ENCODE measurements at regions of chr11 and their contacts with region 1.

Region 1: DNA sequence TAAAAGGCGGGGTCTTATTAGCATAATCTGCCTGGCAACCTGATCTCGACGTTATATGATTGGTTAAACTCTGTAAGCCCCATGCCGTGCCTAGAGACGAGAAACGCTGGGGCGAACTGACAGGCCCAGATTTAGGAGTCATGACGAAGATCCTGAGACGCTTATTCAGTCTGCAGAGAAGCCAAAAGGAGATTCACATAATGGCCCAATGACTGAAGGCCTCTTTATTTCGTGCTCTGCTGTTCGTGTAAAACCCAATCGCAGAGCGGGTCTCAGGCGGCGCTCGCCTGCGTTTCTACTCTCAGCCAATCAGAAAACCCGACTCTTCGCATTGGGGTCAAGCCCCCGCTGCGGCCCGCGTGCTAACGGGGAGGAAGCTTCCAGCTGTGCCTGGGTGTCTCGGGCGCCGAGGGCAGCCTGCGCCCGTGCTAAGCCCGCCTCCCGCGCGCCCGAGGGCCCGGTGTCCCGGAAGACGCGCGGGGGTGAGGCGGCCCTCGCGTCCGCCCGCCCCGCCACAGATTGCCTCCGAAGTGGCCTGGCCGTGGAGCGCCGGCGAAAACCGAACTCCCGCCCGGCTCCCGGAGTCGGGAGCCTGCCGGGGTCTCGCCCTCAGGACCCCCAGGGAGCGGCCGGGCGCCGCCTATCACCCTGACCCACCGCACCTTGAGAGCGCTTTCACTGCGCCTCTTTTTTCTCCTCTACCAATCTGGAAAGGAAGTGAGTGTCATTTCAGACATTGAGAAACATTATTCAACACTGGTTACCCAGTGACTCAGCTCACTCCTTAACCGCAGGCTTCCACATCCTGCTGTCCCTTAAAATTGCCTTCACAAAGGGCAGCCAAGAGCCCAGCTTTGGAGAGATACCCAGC is 446 bp upstream of the PRDM10 start:
- DNase-seq: peak; percentile 99
- ATAC-seq: peak; percentile 68
- H3K4me3 ChIP-seq: peak overlapping the region; percentile 86
- H3K27ac ChIP-seq: peak overlapping the region; percentile 98
- H3K4me1 ChIP-seq: peaks cover 26% of the 10 kb centered on the region
- H3K27me3 ChIP-seq: no peaks in the 10 kb centered on the region
- CTCF ChIP-seq: 0 out of 2 replicates have a peak, but pooled peaks have one; percentile 7

Region 2: GRCh38 chr11:129578006-129578405 is 425.1 kb before region 1 on chr11:
- CTCF ChIA-PET with region 1: no interaction called
- POLR2A ChIA-PET with region 1: no interaction called
- intact Hi-C with region 1: no loop called
- DNase-seq: no peak
- ATAC-seq: no peak
- H3K4me3 ChIP-seq: no peak overlapping the region
- H3K27ac ChIP-seq: no peak overlapping the region
- H3K4me1 ChIP-seq: no peaks in the 10 kb centered on the region
- H3K27me3 ChIP-seq: peaks cover 46% of the 10 kb centered on the region
- CTCF ChIP-seq: no peak

Region 3: DNA sequence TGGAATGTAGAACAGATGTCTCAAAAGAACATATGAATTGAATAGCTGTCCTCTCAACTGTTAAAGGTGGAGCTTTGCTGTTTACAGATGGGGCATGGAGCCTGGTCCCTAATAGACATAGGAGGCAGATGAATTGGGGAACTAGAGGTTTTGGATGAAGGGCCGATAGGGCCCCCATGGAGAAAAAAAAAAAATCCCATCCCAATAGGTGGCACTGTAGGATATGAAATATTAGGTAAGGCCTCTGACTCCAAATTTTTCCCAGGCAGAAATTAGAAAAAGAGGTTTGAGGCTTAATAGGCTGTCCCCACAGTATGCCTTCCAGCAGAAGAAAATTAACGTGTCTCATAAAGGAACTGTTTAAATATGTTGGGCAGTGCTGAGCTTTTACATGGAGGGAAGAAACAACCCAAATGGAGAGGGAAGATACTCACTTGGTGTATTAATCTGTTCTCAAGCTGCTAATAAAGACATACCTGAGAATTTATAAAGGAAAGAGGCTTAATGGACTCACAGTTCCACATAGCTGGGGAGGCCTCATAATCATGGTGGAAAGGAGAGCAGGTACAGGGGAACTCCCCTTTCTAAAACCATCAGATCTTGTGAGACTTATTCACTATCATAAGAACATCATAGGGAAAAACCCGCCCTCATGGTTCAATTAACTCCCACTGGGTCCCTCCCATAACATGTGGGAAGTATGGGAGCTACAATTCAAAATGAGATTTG is 217.5 kb before region 1 on chr11:
- CTCF ChIA-PET with region 1: no interaction called
- POLR2A ChIA-PET with region 1: no interaction called
- intact Hi-C with region 1: loop called (anchors 5 kb)
- DNase-seq: peak; percentile 86
- ATAC-seq: peak; percentile 49
- H3K4me3 ChIP-seq: no peak overlapping the region
- H3K27ac ChIP-seq: peak overlapping the region; percentile 45
- H3K4me1 ChIP-seq: peaks cover 34% of the 10 kb centered on the region
- H3K27me3 ChIP-seq: no peaks in the 10 kb centered on the region
- CTCF ChIP-seq: peak; percentile 90

Region 4: DNA sequence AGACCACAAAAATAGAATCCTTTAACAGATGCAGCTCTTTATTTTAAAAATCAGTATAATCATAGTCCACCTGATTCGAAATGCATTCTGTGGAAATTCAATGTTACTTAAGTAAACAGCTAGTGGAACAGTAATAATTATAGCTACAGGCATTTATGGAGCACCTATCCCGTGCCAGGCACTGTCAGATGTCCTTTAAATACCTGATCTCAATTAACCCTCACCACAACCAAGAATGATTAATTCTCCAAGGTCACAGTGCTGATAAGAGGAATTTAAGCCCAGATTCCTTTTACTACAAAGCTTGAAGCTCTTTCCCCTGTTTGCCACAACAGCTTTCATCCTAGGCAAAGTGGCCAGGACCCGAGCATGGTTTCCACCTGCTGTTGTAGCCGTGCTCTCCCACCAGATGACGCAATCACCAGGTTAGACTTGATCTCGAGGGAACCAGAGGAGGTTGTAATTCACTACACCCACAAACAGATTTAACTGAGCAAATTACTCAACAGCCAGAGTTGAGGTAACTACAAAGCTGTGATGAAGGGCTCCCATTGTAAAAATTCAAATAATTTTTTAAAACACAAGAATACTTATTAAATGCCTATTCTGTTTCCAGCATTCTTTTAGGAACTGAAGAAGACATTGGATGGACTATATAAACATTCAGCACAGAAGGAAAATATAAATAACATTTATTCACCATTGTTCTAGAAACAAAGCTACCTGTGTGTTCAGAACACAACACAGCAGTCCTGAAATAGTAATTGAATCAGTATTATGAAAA is 10.7 kb before region 1 on chr11:
- CTCF ChIA-PET with region 1: interaction called, 4 read pairs
- POLR2A ChIA-PET with region 1: interaction called, 26 read pairs
- intact Hi-C with region 1: no loop called
- DNase-seq: peak; percentile 53
- ATAC-seq: peak; percentile 68
- H3K4me3 ChIP-seq: no peak overlapping the region
- H3K27ac ChIP-seq: no peak overlapping the region
- H3K4me1 ChIP-seq: no peaks in the 10 kb centered on the region
- H3K27me3 ChIP-seq: no peaks in the 10 kb centered on the region
- CTCF ChIP-seq: peak; percentile 64

Region 5: GRCh38 chr11:130051081-130051480 is 48.0 kb after region 1 on chr11:
- CTCF ChIA-PET with region 1: no interaction called
- POLR2A ChIA-PET with region 1: interaction called, 21 read pairs
- intact Hi-C with region 1: no loop called
- DNase-seq: no peak
- ATAC-seq: no peak
- H3K4me3 ChIP-seq: no peak overlapping the region
- H3K27ac ChIP-seq: no peak overlapping the region
- H3K4me1 ChIP-seq: no peaks in the 10 kb centered on the region
- H3K27me3 ChIP-seq: no peaks in the 10 kb centered on the region
- CTCF ChIP-seq: no peak

Region 6: DNA sequence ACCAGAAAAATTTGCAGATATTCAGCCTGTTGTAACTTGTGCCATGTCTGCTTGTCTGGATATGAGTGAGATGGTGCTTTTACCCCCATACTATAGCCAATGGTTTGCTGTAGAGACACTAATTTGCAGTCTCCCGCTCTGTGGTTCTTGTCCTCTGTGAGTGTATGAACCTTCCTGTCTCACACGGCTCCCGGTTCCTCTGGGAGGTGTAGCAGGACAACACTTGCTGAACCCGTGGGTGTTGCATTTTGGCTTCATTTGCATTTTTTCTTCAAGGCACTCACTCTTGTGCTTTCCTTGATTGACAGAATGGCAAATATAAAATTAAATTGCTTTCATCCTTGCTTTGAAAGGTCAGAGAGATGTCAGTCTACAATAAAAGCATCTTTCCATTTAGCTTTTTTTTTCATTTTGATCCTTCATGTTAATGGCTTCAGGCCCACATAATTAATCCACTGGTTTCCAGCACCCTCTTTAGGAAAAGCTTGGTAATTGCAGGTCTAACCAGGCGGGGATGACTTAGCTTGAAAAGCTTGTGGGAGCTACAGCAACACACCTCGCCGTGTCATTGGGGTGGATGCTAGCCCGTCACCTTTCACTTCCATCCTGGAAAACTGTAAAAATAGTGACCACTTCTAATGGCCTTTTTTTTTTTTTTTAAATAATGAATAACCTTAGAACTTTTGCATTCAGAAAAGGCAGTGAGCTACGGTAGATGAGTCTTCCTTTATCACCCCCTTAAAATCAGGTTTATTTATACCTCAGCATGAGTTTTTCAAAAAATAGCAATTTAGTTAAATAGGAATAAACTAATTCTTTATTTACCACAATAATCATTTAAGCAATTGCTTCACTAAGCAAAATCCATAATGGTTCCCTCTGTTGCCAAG is 129.1 kb after region 1 on chr11:
- CTCF ChIA-PET with region 1: interaction called, 37 read pairs
- POLR2A ChIA-PET with region 1: interaction called, 9 read pairs
- intact Hi-C with region 1: loop called (anchors 1 kb)
- DNase-seq: peak; percentile 92
- ATAC-seq: peak; percentile 87
- H3K4me3 ChIP-seq: no peak overlapping the region
- H3K27ac ChIP-seq: no peak overlapping the region
- H3K4me1 ChIP-seq: no peaks in the 10 kb centered on the region
- H3K27me3 ChIP-seq: no peaks in the 10 kb centered on the region
- CTCF ChIP-seq: peak; percentile 95

Measured in PC-3 (cell line).